Breast epithelium (tissue), 4 donors: ENCODE measurements at regions of chr22 and their contacts with region 1.

Region 1: DNA sequence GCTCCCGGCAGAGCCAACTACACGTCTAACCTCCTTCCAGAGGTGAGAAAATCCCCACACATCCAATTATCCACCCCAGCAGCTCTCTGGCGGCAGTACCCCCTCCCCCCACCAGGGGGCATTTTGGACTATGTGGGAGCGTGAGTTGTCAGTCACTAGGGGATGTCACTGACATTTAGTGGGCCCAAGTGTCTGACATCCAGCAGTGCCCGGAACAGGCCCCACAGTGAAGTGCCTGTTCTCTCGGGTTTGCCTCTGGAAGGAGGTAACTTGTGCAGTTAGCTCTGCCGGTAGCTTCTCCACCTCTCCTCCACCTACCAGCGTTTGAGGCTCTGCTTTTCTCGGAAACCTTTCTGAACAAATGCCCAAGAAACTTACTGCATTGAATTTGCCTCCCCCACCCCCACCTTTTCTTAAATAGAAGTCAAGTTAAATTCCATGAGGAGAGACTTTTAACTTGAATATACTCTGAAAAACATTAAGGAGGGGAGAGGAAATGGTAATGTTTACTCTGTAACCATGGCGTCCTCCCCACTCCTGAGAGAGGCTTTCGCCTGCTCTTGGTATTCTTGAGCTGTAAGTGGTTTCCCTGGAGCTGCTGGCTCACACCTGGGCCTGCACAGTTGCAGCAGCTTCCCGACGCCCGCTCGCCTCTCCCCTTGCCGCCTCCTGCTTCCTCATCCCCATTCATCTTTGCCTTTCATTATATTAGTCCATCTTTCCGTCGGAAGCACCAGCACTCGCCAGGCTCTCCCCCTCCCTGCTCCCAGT is 112.8 kb downstream of the WNT7B start:
- DNase-seq: peak in 1 of 2 donors; percentile 50
- H3K4me3 ChIP-seq: no peak overlapping the region
- H3K27ac ChIP-seq: peak overlapping the region; percentile 25 to 58
- H3K4me1 ChIP-seq: peaks cover 9 to 17% of the 10 kb centered on the region in 2 donors
- H3K27me3 ChIP-seq: peaks cover 0 to 9% of the 10 kb centered on the region in 2 donors
- CTCF ChIP-seq: peak; percentile 79 to 87 (median 82)
- POLR2A ChIP-seq: no peak

Region 2: GRCh38 chr22:45584121-45584570 is 280.0 kb before region 1 on chr22:
- intact Hi-C with region 1: loop called (anchors 10 kb)
- DNase-seq: no peak
- H3K4me3 ChIP-seq: peak overlapping the region in 1 of 3 donors; percentile 25
- H3K27ac ChIP-seq: peak overlapping the region in 1 of 2 donors; percentile 63
- H3K4me1 ChIP-seq: no peaks in the 10 kb centered on the region
- H3K27me3 ChIP-seq: no peaks in the 10 kb centered on the region
- CTCF ChIP-seq: no peak
- POLR2A ChIP-seq: no peak

Region 3: DNA sequence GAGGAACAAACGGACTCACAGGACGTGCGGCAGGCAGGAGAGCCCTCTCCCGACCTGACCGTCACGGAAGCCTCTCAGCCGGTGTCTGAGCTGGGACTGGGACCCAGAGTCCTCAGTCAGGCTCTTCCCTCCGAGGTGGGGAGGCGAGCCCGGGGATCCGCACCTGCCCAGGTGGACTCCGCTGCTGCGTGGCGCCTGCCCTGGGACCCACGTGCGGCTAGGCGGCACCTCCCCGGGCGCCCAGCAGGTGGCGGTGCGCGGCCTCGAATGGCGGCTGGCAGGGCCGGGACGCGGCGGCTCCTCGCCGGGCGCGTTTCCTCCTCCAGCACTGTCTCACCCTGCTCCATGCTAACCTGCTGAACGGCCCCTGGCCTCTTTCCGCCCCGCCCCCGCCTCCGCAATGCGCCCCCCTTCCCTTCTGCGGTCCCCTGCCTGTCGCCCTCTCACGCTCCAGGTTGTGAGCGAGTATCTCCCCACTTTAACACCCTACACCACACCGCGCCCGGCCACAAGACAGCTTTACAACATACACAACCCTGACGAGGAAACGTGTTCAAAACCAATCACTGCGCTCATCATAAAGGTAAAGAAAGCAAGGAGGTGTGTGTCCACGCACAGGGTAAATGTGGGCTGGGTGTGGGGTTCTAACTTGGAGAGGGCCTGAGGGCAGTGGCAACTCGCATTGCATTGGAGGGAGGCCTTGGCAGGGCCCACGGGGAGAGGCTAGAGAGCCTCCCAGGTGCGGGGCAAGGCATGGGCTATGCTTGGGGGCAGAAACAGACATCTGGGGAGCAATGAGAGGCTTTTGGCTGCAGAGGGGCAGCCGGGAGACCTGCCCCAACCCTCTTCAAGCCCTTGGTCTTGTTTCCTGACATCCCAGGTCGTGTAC is 218.4 kb before region 1 on chr22:
- intact Hi-C with region 1: no loop called
- DNase-seq: peak; percentile 49 to 80
- H3K4me3 ChIP-seq: peak overlapping the region in 1 of 3 donors; percentile 49
- H3K27ac ChIP-seq: no peak overlapping the region
- H3K4me1 ChIP-seq: peaks cover 0 to 3% of the 10 kb centered on the region in 2 donors
- H3K27me3 ChIP-seq: no peaks in the 10 kb centered on the region
- CTCF ChIP-seq: peak; percentile 55 to 95 (median 62)
- POLR2A ChIP-seq: no peak

Region 4: GRCh38 chr22:45970705-45971407 is 106.7 kb after region 1 on chr22:
- intact Hi-C with region 1: loop called (anchors 5 kb)
- DNase-seq: no peak
- H3K4me3 ChIP-seq: peak overlapping the region in 2 of 3 donors; percentile 36 to 66
- H3K27ac ChIP-seq: no peak overlapping the region
- H3K4me1 ChIP-seq: peaks cover 14 to 18% of the 10 kb centered on the region in 2 donors
- H3K27me3 ChIP-seq: peaks cover 13 to 88% of the 10 kb centered on the region in 2 donors
- CTCF ChIP-seq: no peak
- POLR2A ChIP-seq: no peak